ENCODE measurements at regions of chr15 and their contacts with region 1.

Region 1: GRCh38 chr15:52261498-52262242 is 33.9 kb downstream of the MYO5C start:
- DNase-seq: peak in 7 of 9 donors; percentile 11 to 63 (median 29)
- ATAC-seq: peak; percentile 92
- H3K4me3 ChIP-seq: no peak overlapping the region
- H3K4me3 Mint-ChIP-seq: peak overlapping the region; percentile 50 to 70 (median 66)
- H3K27ac ChIP-seq: peak overlapping the region; percentile 35
- H3K27ac Mint-ChIP-seq: peak overlapping the region; percentile 16 to 90 (median 71)
- H3K4me1 ChIP-seq: peaks cover 16 to 34% of the 10 kb centered on the region in 2 donors
- H3K4me1 Mint-ChIP-seq: peaks cover 27 to 55% (median 39%) of the 10 kb centered on the region in 7 donors
- H3K27me3 ChIP-seq: no peaks in the 10 kb centered on the region
- H3K27me3 Mint-ChIP-seq: no peaks in the 10 kb centered on the region

Region 2: GRCh38 chr15:52735231-52736089 is 473.8 kb after region 1 on chr15:
- CTCF ChIA-PET with region 1: interaction called, 113 read pairs
- POLR2A ChIA-PET with region 1: interaction called, 4 read pairs
- intact Hi-C with region 1: loop called (anchors 1 kb)
- DNase-seq: peak; percentile 22 to 83 (median 73)
- ATAC-seq: peak; percentile 90
- H3K4me3 ChIP-seq: no peak overlapping the region
- H3K4me3 Mint-ChIP-seq: no peak overlapping the region
- H3K27ac ChIP-seq: no peak overlapping the region
- H3K27ac Mint-ChIP-seq: peak overlapping the region in 3 of 9 donors; percentile 2 to 75 (median 55)
- H3K4me1 ChIP-seq: peaks cover under 1 to 4% of the 10 kb centered on the region in 2 donors
- H3K4me1 Mint-ChIP-seq: peaks cover 0 to 25% (median 7%) of the 10 kb centered on the region in 7 donors
- H3K27me3 ChIP-seq: no peaks in the 10 kb centered on the region
- H3K27me3 Mint-ChIP-seq: peaks cover 0 to 12% (median 3%) of the 10 kb centered on the region in 5 donors

Region 3: GRCh38 chr15:52876991-52877663 is 615.5 kb after region 1 on chr15:
- CTCF ChIA-PET with region 1: no interaction called
- POLR2A ChIA-PET with region 1: no interaction called
- intact Hi-C with region 1: no loop called
- DNase-seq: no peak
- ATAC-seq: no peak
- H3K4me3 ChIP-seq: no peak overlapping the region
- H3K4me3 Mint-ChIP-seq: no peak overlapping the region
- H3K27ac ChIP-seq: no peak overlapping the region
- H3K27ac Mint-ChIP-seq: no peak overlapping the region
- H3K4me1 ChIP-seq: no peaks in the 10 kb centered on the region
- H3K4me1 Mint-ChIP-seq: no peaks in the 10 kb centered on the region
- H3K27me3 ChIP-seq: no peaks in the 10 kb centered on the region
- H3K27me3 Mint-ChIP-seq: peaks cover 5 to 44% (median 17%) of the 10 kb centered on the region in 5 donors

Measured in naive thymus-derived CD4-positive, alpha-beta T cell (primary cell).